GM12878 (cell line): ENCODE measurements at regions of chr4 and their contacts with region 1.

Region 1: DNA sequence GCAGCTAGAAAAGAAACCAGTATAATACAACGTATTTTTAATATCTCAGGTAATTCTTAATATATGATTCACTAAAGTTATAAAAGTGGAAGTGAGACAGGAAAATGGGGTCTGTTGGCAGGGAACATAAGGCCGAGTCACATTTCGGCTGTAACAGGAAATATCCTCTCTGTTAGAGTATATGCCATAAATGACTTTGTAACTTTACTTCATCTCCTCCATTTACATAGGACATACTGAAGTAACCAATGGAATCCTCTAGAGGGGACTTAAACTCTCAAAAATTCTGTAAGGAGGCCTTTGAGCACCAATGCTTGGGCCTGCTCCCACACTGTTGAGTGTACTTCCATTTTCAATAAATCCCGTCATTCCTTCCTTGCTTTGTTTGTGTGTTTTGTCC is 71.3 kb downstream of the ANKRD17 start:
- DNase-seq: no peak
- ATAC-seq: peak; percentile 77
- H3K4me3 ChIP-seq: no peak overlapping the region
- H3K27ac ChIP-seq: no peak overlapping the region
- H3K4me1 ChIP-seq: peaks cover 4% of the 10 kb centered on the region; the same call in 1 of the 2 replicates
- H3K27me3 ChIP-seq: no peaks in the 10 kb centered on the region
- CTCF ChIP-seq: no peak
- EP300 ChIP-seq: no peak
- POLR2A ChIP-seq: no peak
- RAD21 ChIP-seq: no peak

Region 2: GRCh38 chr4:73139991-73140390 is 47.3 kb before region 1 on chr4:
- CTCF ChIA-PET with region 1: no interaction called
- POLR2A ChIA-PET with region 1: no interaction called
- RAD21 ChIA-PET with region 1: no interaction called
- SMC1A ChIA-PET with region 1: no interaction called
- in situ Hi-C with region 1: no loop called
- intact Hi-C with region 1: no loop called
- DNase-seq: no peak
- ATAC-seq: no peak
- H3K4me3 ChIP-seq: no peak overlapping the region
- H3K27ac ChIP-seq: no peak overlapping the region
- H3K4me1 ChIP-seq: no peaks in the 10 kb centered on the region
- H3K27me3 ChIP-seq: no peaks in the 10 kb centered on the region
- CTCF ChIP-seq: no peak
- EP300 ChIP-seq: no peak
- POLR2A ChIP-seq: no peak
- RAD21 ChIP-seq: no peak

Region 3: GRCh38 chr4:73152893-73153292 is 34.4 kb before region 1 on chr4:
- CTCF ChIA-PET with region 1: no interaction called
- POLR2A ChIA-PET with region 1: no interaction called
- RAD21 ChIA-PET with region 1: no interaction called
- SMC1A ChIA-PET with region 1: interaction called, 3 read pairs
- in situ Hi-C with region 1: no loop called
- intact Hi-C with region 1: loop called (anchors 1 kb)
- DNase-seq: no peak
- ATAC-seq: no peak
- H3K4me3 ChIP-seq: no peak overlapping the region
- H3K27ac ChIP-seq: no peak overlapping the region
- H3K4me1 ChIP-seq: no peaks in the 10 kb centered on the region
- H3K27me3 ChIP-seq: no peaks in the 10 kb centered on the region
- CTCF ChIP-seq: no peak
- EP300 ChIP-seq: no peak
- POLR2A ChIP-seq: no peak
- RAD21 ChIP-seq: no peak

Region 4: GRCh38 chr4:73508651-73509050 is 321.3 kb after region 1 on chr4:
- CTCF ChIA-PET with region 1: no interaction called
- POLR2A ChIA-PET with region 1: no interaction called
- RAD21 ChIA-PET with region 1: no interaction called
- SMC1A ChIA-PET with region 1: no interaction called
- in situ Hi-C with region 1: no loop called
- intact Hi-C with region 1: no loop called
- DNase-seq: no peak
- ATAC-seq: no peak
- H3K4me3 ChIP-seq: no peak overlapping the region
- H3K27ac ChIP-seq: no peak overlapping the region
- H3K4me1 ChIP-seq: no peaks in the 10 kb centered on the region
- H3K27me3 ChIP-seq: no peaks in the 10 kb centered on the region
- CTCF ChIP-seq: no peak
- EP300 ChIP-seq: no peak
- POLR2A ChIP-seq: no peak
- RAD21 ChIP-seq: no peak